ENCODE measurements at regions of chr12 and their contacts with region 1.

Region 1: GRCh38 chr12:110836291-110836690 is 10.5 kb upstream of the CCDC63 start:
- DNase-seq: no peak
- ATAC-seq: no peak
- H3K4me3 ChIP-seq: no peak overlapping the region
- H3K4me3 Mint-ChIP-seq: no peak overlapping the region
- H3K27ac ChIP-seq: no peak overlapping the region
- H3K27ac Mint-ChIP-seq: no peak overlapping the region
- H3K4me1 ChIP-seq: no peaks in the 10 kb centered on the region
- H3K4me1 Mint-ChIP-seq: no peaks in the 10 kb centered on the region
- H3K27me3 ChIP-seq: no peaks in the 10 kb centered on the region
- H3K27me3 Mint-ChIP-seq: no peaks in the 10 kb centered on the region
- CTCF ChIP-seq: no peak

Region 2: GRCh38 chr12:110704748-110705147 is 131.5 kb before region 1 on chr12:
- CTCF ChIA-PET with region 1: no interaction called
- POLR2A ChIA-PET with region 1: no interaction called
- intact Hi-C with region 1: loop called in 1 of 2 experiments (anchors 10 kb)
- DNase-seq: peak in 3 of 14 experiments; percentile 24 to 49 (median 44)
- ATAC-seq: peak; percentile 62
- H3K4me3 ChIP-seq: no peak overlapping the region
- H3K4me3 Mint-ChIP-seq: no peak overlapping the region
- H3K27ac ChIP-seq: no peak overlapping the region
- H3K27ac Mint-ChIP-seq: no peak overlapping the region
- H3K4me1 ChIP-seq: no peaks in the 10 kb centered on the region
- H3K4me1 Mint-ChIP-seq: peaks cover 5% of the 10 kb centered on the region
- H3K27me3 ChIP-seq: no peaks in the 10 kb centered on the region
- H3K27me3 Mint-ChIP-seq: no peaks in the 10 kb centered on the region
- CTCF ChIP-seq: no peak

Region 3: DNA sequence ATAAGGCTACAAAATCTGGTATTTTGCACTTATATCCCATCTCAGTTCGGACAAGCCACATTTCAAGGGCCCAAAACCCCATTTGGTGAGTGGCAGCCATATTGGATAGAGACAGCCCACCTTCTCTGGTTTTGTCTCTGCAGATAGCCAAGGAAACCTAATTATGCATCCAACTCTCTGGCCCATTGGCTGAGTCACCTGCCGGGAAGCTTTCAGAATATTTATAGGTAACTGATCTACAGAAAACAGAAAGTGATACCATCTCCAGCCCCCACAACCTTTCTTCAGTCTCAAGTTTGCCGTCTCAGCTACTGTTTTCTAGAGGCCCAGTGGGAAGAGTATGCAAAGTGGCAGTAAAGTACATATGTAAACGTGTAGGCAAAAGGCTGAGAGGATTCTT is 59.9 kb before region 1 on chr12:
- CTCF ChIA-PET with region 1: no interaction called
- POLR2A ChIA-PET with region 1: no interaction called
- intact Hi-C with region 1: no loop called
- DNase-seq: peak in 3 of 14 experiments; percentile 12 to 32 (median 18)
- ATAC-seq: no peak
- H3K4me3 ChIP-seq: no peak overlapping the region
- H3K4me3 Mint-ChIP-seq: peak overlapping the region; percentile 5
- H3K27ac ChIP-seq: no peak overlapping the region
- H3K27ac Mint-ChIP-seq: peak overlapping the region; percentile 22
- H3K4me1 ChIP-seq: peaks cover 53% of the 10 kb centered on the region
- H3K4me1 Mint-ChIP-seq: peaks cover 59% of the 10 kb centered on the region
- H3K27me3 ChIP-seq: no peaks in the 10 kb centered on the region
- H3K27me3 Mint-ChIP-seq: no peaks in the 10 kb centered on the region
- CTCF ChIP-seq: no peak